Breast epithelium (tissue), 4 donors: ENCODE measurements at regions of chr18 and their contacts with region 1.

Region 1: GRCh38 chr18:55509631-55510324 is 78.2 kb downstream of the TCF4 start:
- DNase-seq: no peak
- H3K4me3 ChIP-seq: peak overlapping the region in 2 of 3 donors; percentile 11 to 41
- H3K27ac ChIP-seq: peak overlapping the region; percentile 52 to 73
- H3K4me1 ChIP-seq: no peaks in the 10 kb centered on the region
- H3K27me3 ChIP-seq: no peaks in the 10 kb centered on the region
- CTCF ChIP-seq: no peak
- POLR2A ChIP-seq: no peak

Region 2: DNA sequence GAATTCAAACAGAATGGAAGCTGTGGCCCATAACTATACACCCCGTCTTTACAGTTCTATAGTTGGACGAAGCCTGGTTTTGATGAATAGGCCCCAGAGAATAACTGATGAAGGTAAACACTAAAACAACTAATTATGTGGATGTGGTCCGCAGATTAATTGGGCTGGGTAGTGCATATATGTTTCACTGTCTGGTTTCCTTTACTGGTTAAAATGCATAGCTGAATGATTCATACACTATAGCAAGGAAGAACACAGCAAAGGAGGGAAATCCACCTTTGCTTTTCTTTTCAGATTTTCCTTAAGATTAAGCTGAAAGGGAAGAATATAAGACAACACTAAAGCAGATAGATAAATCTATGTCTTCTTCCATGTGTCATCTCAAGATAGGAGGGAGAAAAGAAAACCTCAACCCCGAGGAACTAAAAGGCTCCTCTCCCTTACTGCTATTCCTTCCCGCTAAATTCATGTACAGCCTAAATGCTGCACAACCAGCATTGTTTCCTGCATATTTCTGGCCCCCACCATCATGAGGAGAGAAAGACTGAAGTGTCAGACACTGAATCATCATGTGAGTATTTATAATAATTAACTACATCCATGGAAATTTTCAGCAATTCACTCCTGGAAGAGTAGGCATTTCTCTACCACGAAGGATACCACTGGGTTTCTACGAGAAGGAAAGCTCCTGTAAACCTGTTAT is 253.4 kb before region 1 on chr18:
- intact Hi-C with region 1: loop called (anchors 5 kb)
- DNase-seq: no peak
- H3K4me3 ChIP-seq: no peak overlapping the region
- H3K27ac ChIP-seq: no peak overlapping the region
- H3K4me1 ChIP-seq: no peaks in the 10 kb centered on the region
- H3K27me3 ChIP-seq: no peaks in the 10 kb centered on the region
- CTCF ChIP-seq: no peak
- POLR2A ChIP-seq: no peak

Region 3: GRCh38 chr18:55422456-55423180 is 87.2 kb before region 1 on chr18:
- intact Hi-C with region 1: no loop called
- DNase-seq: no peak
- H3K4me3 ChIP-seq: peak overlapping the region; percentile 34 to 59 (median 39)
- H3K27ac ChIP-seq: peak overlapping the region; percentile 82 to 86
- H3K4me1 ChIP-seq: no peaks in the 10 kb centered on the region
- H3K27me3 ChIP-seq: no peaks in the 10 kb centered on the region
- CTCF ChIP-seq: no peak
- POLR2A ChIP-seq: no peak